ENCODE measurements at regions of chr5 and their contacts with region 1.

Region 1: DNA sequence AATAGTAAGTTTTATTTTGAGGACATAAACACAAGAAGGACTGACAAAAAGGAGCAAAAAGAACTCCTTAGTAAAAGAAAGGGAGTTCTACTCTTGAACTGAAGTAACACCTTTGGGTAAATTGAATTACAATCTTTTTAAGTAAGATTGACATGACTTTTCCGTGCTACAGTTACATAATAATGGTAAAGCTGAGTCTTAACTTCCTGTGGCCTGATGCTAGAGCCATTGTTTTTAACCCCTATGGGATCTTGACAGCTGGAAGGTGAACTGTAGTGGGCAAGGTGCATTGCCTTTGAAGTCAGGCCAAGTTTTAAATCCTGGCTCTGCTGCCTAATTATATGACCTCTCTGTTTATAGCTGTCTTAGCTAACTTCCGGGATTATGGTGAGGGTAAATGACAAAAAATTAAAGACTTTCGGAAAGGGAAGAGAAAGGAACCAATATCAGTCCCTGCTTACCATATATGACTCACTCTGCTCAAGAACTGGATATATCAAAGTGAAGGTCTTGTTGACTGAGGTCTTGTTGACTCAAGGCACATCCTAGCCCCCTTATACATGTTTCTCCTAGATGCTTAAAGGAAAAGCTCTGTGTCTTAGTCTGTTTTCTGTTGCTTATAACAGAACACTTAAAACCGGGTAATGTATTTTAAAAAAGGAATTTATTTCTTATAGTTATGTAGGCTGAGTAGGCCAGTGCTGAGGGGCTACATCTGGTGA is 6.8 kb downstream of the HSD17B4 start:
- DNase-seq: no peak
- H3K4me3 ChIP-seq: no peak overlapping the region
- H3K27me3 ChIP-seq: no peaks in the 10 kb centered on the region
- CTCF ChIP-seq: no peak

Region 2: DNA sequence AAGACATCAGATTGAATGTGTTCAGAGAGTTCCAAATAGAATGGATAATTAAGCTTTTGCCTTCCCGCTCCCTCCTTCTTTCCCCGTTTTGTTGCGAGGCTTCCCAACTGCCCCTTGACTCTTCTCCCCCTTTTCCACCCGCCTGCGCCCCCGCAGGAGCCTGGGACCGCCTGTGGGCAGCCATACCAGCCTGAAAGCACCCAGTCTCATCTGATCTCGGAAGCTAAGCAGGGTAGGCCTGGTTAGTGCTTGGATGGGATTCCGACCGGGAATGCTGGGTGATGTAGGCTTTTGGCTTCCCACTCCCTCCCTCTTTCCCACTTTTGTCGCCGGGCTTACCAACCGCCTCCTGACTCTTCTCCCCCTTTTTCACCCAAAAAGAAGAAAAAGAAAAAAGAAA is 13.5 kb before region 1 on chr5:
- CTCF ChIA-PET with region 1: no interaction called
- POLR2A ChIA-PET with region 1: no interaction called
- DNase-seq: no peak
- H3K4me3 ChIP-seq: no peak overlapping the region
- H3K27me3 ChIP-seq: peaks cover 2% of the 10 kb centered on the region; the same call in 1 of the 2 replicates
- CTCF ChIP-seq: no peak

Region 3: GRCh38 chr5:119478781-119479180 is 19.7 kb after region 1 on chr5:
- CTCF ChIA-PET with region 1: no interaction called
- POLR2A ChIA-PET with region 1: no interaction called
- DNase-seq: no peak
- H3K4me3 ChIP-seq: no peak overlapping the region
- H3K27me3 ChIP-seq: no peaks in the 10 kb centered on the region
- CTCF ChIP-seq: no peak

Region 4: GRCh38 chr5:119501671-119502182 is 42.7 kb after region 1 on chr5:
- CTCF ChIA-PET with region 1: no interaction called
- POLR2A ChIA-PET with region 1: no interaction called
- DNase-seq: no peak
- H3K4me3 ChIP-seq: no peak overlapping the region
- H3K27me3 ChIP-seq: no peaks in the 10 kb centered on the region
- CTCF ChIP-seq: no peak

Region 5: GRCh38 chr5:119515192-119515591 is 56.1 kb after region 1 on chr5:
- CTCF ChIA-PET with region 1: no interaction called
- POLR2A ChIA-PET with region 1: interaction called, 12 read pairs
- DNase-seq: no peak
- H3K4me3 ChIP-seq: no peak overlapping the region
- H3K27me3 ChIP-seq: no peaks in the 10 kb centered on the region
- CTCF ChIP-seq: no peak

Measured in BJ (cell line).